Activated T-helper 1 cell treated with anti-CD3 and anti-CD28 coated beads, Interleukin-12 subunit alpha, Interleukin-12 subunit beta, Interleukin-2, Interleukin-4 antibody, amounts not matched to agents 30 ng/mL and 10 ng/mL and 1 ng/mL, durations not matched to agents 14 hours and 24 hours and 36 hours (primary cell): ENCODE measurements at regions of chr12 and their contacts with region 1.

Region 1: DNA sequence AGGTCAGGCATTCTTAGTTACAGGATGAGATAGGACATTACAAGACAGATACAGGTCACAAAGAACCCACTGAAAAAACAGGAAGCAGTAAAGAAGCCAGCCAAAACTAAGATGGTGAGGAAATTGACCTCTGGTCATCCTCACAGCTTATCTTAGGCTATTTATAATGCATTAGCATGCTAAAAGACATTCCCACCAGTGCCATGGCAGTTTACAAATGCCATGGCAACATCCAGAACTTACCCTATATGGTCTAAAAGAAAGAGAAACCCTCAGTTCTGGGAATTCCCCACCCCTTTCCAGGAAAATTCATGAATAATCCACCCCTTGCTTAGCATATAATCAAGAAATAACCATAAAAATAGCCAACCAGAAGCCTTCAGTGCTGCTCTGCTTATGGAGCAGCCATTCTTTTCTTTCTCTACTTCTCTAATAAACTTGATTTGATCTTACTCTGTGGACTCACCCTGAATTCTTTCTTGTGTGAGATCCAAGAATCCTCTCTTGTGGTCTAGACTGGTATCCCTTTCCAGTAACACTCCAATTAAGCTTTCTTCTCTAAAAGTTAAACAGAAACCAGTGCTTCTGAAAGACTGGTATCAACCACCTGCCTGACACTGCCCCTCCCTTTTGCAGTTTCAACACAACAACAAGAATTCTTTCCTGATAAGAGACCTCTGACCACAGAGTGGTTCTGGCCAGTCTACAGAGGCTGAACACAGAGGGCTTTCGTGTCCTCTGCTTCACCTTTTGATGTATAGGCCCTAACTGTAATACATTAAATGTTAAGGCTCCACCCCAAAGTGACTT is 86.9 kb downstream of the BCAT1 start:
- DNase-seq: no peak
- H3K4me3 Mint-ChIP-seq: no peak overlapping the region
- H3K27ac Mint-ChIP-seq: no peak overlapping the region
- H3K4me1 Mint-ChIP-seq: peaks cover 39% of the 10 kb centered on the region
- H3K27me3 Mint-ChIP-seq: no peaks in the 10 kb centered on the region

Region 2: DNA sequence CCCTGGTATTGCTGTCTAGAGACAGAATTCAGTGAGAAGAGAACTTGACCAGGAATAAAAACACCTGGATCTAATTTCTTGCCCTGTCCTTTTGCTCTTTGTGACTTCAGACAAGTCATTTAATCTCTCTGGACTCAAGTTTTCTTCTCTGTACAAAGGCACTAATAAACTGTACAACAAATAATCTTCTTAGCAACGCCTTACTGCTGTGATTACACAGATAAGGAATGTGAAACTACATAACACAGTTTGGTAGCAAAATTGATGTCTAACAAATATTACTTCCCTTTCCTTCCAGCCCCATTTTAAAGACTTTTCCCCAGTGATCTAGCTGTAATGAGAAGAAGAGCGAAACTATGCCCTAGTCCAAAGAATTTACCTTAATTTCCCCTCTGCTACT is 17.7 kb after region 1 on chr12:
- intact Hi-C with region 1: loop called (anchors 2 kb)
- DNase-seq: no peak
- H3K4me3 Mint-ChIP-seq: no peak overlapping the region
- H3K27ac Mint-ChIP-seq: no peak overlapping the region
- H3K4me1 Mint-ChIP-seq: no peaks in the 10 kb centered on the region
- H3K27me3 Mint-ChIP-seq: no peaks in the 10 kb centered on the region